ENCODE measurements at regions of chr5 and their contacts with region 1.

Region 1: DNA sequence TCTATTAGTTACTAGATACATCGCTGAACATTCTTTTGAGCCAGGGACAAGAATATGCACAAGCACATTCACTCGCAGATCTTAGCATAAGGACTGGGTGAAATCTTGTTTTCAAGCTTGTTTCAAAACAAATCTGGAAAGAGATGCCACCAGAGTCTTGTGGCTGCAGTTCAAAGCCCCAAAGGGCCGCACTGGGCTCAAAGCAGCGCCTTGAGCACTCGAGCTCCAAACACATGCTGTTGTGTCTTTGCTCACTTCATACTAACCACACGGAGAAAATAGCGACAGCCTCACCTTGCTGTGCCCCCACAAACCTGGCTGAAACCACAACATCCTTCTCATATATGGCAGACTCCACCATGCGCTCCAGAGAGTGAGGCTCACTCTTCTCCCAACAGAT is 34.2 kb upstream of the IL7R start:
- DNase-seq: peak; percentile 54
- ATAC-seq: peak; percentile 76
- H3K4me3 Mint-ChIP-seq: peak overlapping the region; percentile 72
- H3K27ac Mint-ChIP-seq: peak overlapping the region; percentile 81
- H3K4me1 Mint-ChIP-seq: peaks cover 74% of the 10 kb centered on the region
- H3K27me3 Mint-ChIP-seq: no peaks in the 10 kb centered on the region

Region 2: GRCh38 chr5:35811108-35811741 is 11.3 kb before region 1 on chr5:
- POLR2A ChIA-PET with region 1: interaction called, 16 read pairs
- DNase-seq: no peak
- ATAC-seq: peak; percentile 57
- H3K4me3 Mint-ChIP-seq: peak overlapping the region; percentile 54
- H3K27ac Mint-ChIP-seq: peak overlapping the region; percentile 78
- H3K4me1 Mint-ChIP-seq: peaks cover 23% of the 10 kb centered on the region
- H3K27me3 Mint-ChIP-seq: no peaks in the 10 kb centered on the region

Region 3: GRCh38 chr5:35832762-35833161 is 10.3 kb after region 1 on chr5:
- POLR2A ChIA-PET with region 1: interaction called, 13 read pairs
- DNase-seq: no peak
- ATAC-seq: no peak
- H3K4me3 Mint-ChIP-seq: no peak overlapping the region
- H3K27ac Mint-ChIP-seq: peak overlapping the region; percentile 4
- H3K4me1 Mint-ChIP-seq: peaks cover 60% of the 10 kb centered on the region
- H3K27me3 Mint-ChIP-seq: no peaks in the 10 kb centered on the region